Activated naive CD4-positive, alpha-beta T cell treated with anti-CD3 and anti-CD28 coated beads, Interleukin-2, amount 10 ng/mL, durations not matched to agents 7 days and 5 days (primary cell): ENCODE measurements at regions of chr2 and their contacts with region 1.

Region 1: DNA sequence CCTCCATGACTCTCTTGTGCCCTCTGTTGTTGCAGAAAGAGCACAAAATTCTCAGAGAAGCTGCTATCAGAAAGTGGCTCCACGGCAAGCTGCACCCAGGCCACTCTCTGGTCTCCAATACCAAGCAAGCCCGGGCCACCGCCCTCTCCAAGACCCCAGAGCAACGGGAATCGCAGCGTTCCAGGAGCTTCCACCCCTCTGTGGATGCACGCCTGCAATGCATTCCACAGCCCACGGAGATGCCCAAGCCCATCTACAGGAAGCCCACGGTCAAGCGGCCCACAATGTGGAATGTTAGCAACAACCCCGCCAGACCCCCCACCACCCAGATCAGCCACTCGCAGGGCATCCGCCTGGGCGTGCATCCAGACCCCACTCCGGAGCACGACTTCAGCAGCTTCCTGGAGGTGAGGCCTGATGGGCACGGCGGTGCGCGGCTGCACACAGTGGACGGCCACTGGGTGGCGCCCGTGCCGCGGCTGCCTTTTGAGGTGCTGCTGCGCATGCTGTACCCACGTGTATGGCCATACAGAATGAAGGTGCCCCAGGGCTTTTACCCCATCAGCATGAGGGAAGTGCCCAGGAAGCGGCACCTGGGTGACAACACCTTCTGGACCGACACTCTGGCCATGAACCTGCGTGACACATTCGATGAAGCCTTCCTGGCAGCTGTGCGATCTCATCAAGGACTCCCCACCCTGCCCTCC is 6.3 kb downstream of the ANKRD53 start:
- DNase-seq: peak; percentile 89
- H3K4me3 Mint-ChIP-seq: peak overlapping the region; percentile 33
- H3K27ac Mint-ChIP-seq: peak overlapping the region; percentile 56
- H3K4me1 Mint-ChIP-seq: peaks cover 17% of the 10 kb centered on the region
- H3K27me3 Mint-ChIP-seq: no peaks in the 10 kb centered on the region

Region 2: DNA sequence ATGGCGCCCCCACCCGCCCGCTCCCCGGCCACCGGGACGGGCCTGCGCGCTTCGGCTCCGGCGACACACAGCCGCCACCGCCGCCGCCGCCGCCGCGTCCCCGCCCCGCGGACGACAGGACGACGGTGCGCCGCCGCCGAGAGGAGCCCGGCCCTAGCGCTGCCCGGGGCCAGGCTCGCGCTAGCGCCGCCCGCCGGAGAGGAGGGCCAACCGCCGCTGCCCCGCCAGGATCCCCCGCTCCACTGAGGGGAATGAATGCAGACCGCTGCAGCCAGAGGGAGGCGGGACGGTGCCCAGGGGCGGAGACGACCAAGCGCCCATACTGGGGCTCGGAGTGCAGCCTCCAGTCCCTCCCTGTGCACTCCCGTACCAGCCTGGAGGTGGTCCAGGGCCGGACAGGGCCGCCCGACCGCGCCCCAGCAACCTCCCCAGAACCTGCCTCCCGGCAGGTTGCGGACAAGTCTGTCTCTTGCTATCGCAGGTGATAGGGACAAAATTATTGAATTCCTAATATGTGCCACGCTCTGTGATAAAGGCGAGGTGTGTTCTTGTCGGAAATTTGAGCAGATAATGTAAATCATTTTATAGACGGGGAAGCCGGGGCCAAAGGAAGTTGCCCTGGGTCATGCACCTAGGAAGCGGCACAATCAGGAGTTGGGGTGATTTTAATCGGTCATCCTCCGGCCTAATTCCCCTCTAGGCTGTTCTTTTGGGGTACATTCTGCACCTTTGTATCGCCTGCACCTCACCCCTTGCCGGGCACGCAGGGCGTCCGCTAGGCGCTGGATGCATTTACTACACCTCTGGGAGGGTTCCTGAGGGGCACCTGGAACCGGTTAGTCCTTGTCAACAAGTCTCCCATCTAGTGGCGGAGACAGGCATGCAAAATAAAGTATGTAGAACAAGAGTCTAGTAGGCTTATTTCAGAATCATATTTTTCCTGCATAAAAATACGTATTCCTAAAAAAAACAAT is 10.3 kb after region 1 on chr2 and contains the start of gene TEX261:
- CTCF ChIA-PET with region 1: interaction called, 52 read pairs
- DNase-seq: peak; percentile 92
- H3K4me3 Mint-ChIP-seq: peak within 1 kb of the TSS; percentile 92
- H3K27ac Mint-ChIP-seq: peak within 1 kb of the TSS; percentile 92
- H3K4me1 Mint-ChIP-seq: peaks cover 39% of the 10 kb centered on the region
- H3K27me3 Mint-ChIP-seq: no peaks in the 10 kb centered on the region

Region 3: GRCh38 chr2:71000780-71001591 is 16.3 kb after region 1 on chr2:
- CTCF ChIA-PET with region 1: interaction called, 52 read pairs
- DNase-seq: peak; percentile 86
- H3K4me3 Mint-ChIP-seq: peak overlapping the region; percentile 54
- H3K27ac Mint-ChIP-seq: peak overlapping the region; percentile 55
- H3K4me1 Mint-ChIP-seq: peaks cover 34% of the 10 kb centered on the region
- H3K27me3 Mint-ChIP-seq: peaks cover 23% of the 10 kb centered on the region